GM12878 (cell line): ENCODE measurements at regions of chr17 and their contacts with region 1.

Region 1: GRCh38 chr17:76681222-76682137 is 29.3 kb downstream of the MXRA7 start:
- DNase-seq: no peak
- ATAC-seq: peak; percentile 94
- H3K4me3 ChIP-seq: no peak overlapping the region
- H3K27ac ChIP-seq: no peak overlapping the region
- H3K4me1 ChIP-seq: no peaks in the 10 kb centered on the region
- H3K27me3 ChIP-seq: peaks cover 0 to 5% of the 10 kb centered on the region in 2 experiments; a peak in 2 of 4 replicates
- CTCF ChIP-seq: peak; percentile 81 to 86 (median 83)
- EP300 ChIP-seq: no peak
- POLR2A ChIP-seq: no peak
- RAD21 ChIP-seq: peak; percentile 82

Region 2: DNA sequence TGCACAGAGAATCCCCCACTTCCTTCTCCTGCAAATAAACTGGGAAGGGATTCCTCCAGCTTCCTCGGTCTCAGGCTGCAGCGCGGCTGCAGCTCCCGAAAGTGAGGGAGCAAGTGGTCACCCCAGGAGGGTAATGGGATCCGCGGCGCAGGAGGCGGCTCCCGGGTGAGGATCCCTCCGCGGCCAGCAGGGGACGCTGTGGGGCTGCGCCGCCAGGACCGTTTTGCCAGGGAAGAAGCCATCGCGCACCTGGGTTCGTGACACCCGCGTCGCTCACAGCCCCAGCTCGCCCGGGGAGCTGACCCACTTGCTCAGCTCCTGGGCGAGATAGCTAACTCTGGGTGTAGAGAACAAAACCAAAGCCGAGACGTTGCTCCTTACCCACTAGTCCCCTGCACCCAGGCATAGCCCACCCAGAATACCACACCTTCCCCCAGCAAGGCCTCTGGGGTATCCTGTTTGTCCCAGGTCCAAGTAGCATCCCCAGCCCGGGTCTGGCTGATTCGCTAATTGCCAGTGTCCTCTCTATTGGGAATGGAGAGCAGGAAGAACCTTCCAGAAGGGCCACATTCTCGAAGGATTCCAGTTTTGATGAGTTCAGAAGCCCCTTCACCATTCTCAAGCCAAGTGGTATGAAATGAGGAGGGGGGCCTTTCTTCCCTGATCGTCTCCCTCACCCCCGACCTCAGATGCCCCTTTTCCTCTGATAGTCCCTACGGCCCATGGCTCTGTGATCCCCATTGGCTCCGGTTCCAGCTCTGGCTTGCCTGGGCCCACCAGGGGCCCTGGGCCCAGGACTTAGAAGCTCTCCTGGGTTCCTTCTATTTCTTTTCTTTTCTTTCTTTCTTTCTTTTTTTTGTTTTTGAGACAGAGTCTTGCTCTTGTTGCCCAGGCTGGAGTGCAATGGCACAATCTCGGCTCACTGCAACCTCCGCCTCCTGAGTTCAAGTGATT is 158.1 kb before region 1 on chr17:
- CTCF ChIA-PET with region 1: interaction called, 18 read pairs
- POLR2A ChIA-PET with region 1: no interaction called
- RAD21 ChIA-PET with region 1: interaction called, 5 read pairs
- SMC1A ChIA-PET with region 1: interaction called, 5 read pairs
- in situ Hi-C with region 1: loop called (anchors 5 kb)
- intact Hi-C with region 1: loop called (anchors 2 kb)
- DNase-seq: no peak
- ATAC-seq: peak; percentile 75
- H3K4me3 ChIP-seq: no peak overlapping the region
- H3K27ac ChIP-seq: no peak overlapping the region
- H3K4me1 ChIP-seq: peaks cover 10% of the 10 kb centered on the region
- H3K27me3 ChIP-seq: no peaks in the 10 kb centered on the region
- CTCF ChIP-seq: peak; percentile 99 to 100 (median 99); a peak in 5 of 6 replicates
- EP300 ChIP-seq: no peak
- POLR2A ChIP-seq: no peak
- RAD21 ChIP-seq: peak; percentile 89

Region 3: GRCh38 chr17:76671123-76671911 is 10.2 kb before region 1 on chr17:
- CTCF ChIA-PET with region 1: interaction called, 27 read pairs
- POLR2A ChIA-PET with region 1: no interaction called
- RAD21 ChIA-PET with region 1: interaction called, 11 read pairs
- SMC1A ChIA-PET with region 1: interaction called, 12 read pairs
- in situ Hi-C with region 1: no loop called
- intact Hi-C with region 1: no loop called
- DNase-seq: peak; percentile 99
- ATAC-seq: peak; percentile 100
- H3K4me3 ChIP-seq: peak overlapping the region; percentile 80; the same call in 1 of the 2 replicates
- H3K27ac ChIP-seq: peak overlapping the region; percentile 71
- H3K4me1 ChIP-seq: peaks cover 5% of the 10 kb centered on the region
- H3K27me3 ChIP-seq: no peaks in the 10 kb centered on the region; a peak in 1 of 4 replicates
- CTCF ChIP-seq: no peak
- EP300 ChIP-seq: no peak
- POLR2A ChIP-seq: peak; percentile 79
- RAD21 ChIP-seq: no peak

Region 4: GRCh38 chr17:76696763-76697701 is 15.6 kb after region 1 on chr17:
- CTCF ChIA-PET with region 1: interaction called, 21 read pairs
- POLR2A ChIA-PET with region 1: no interaction called
- RAD21 ChIA-PET with region 1: no interaction called
- SMC1A ChIA-PET with region 1: interaction called, 9 read pairs
- in situ Hi-C with region 1: no loop called
- intact Hi-C with region 1: no loop called
- DNase-seq: peak; percentile 40
- ATAC-seq: peak; percentile 92
- H3K4me3 ChIP-seq: no peak overlapping the region
- H3K27ac ChIP-seq: no peak overlapping the region
- H3K4me1 ChIP-seq: peaks cover 22% of the 10 kb centered on the region
- H3K27me3 ChIP-seq: no peaks in the 10 kb centered on the region; a peak in 1 of 4 replicates
- CTCF ChIP-seq: no peak
- EP300 ChIP-seq: no peak
- POLR2A ChIP-seq: no peak
- RAD21 ChIP-seq: no peak

Region 5: GRCh38 chr17:76714822-76715495 is 33.5 kb after region 1 on chr17:
- CTCF ChIA-PET with region 1: interaction called, 18 read pairs
- POLR2A ChIA-PET with region 1: no interaction called
- RAD21 ChIA-PET with region 1: interaction called, 10 read pairs
- SMC1A ChIA-PET with region 1: no interaction called
- in situ Hi-C with region 1: no loop called
- intact Hi-C with region 1: no loop called
- DNase-seq: no peak
- ATAC-seq: peak; percentile 71
- H3K4me3 ChIP-seq: no peak overlapping the region
- H3K27ac ChIP-seq: no peak overlapping the region
- H3K4me1 ChIP-seq: peaks cover 8% of the 10 kb centered on the region
- H3K27me3 ChIP-seq: no peaks in the 10 kb centered on the region; a peak in 1 of 4 replicates
- CTCF ChIP-seq: peak; percentile 68 to 77 (median 69)
- EP300 ChIP-seq: no peak
- POLR2A ChIP-seq: no peak
- RAD21 ChIP-seq: peak; percentile 71

Region 6: DNA sequence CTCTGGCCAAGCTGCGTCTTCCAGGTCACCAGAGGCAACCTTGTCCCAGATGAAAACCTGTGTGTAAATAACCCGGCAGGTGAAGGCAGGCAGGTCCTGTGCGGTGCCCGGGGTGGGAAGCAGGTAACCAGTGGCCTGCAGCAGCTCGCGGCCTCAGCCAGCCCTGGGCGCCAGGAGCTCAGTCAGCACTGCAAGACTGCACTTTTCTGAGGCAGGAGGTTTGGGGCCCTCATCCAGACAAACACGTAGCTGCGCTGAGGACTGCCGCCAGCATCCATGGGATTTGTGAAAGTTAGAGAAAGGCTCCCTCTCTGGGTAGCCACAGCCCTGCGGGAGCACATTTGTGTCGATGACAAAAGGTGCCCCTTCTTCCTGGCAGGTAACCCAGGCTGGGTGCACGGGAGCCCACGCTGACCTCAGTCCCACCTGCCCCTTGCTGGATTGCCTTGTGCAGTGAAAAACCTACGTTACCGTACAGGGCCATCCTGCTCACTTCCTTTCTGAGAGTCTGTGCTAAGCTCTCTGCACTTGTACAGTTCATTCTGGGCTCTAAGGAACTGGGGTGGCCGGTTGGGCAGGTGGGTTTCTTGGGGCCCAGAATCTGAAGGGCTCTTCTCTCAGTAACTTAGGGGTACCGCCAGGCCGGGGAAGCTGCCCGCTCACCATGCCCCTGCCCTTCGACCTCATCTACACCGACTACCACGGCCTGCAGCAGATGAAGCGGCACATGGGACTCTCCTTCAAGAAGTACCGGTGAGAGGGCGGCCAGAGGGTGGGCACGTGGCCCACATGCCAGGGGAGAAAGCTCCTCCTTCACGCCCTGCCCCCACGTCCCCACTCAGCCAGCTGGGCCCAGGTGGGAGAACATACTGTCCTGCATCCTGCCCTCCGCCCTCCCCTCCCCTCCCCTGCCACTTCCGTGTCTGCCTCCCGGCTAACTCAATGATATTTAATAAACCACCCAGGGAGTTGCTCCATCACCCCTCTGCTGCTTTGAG is 243.2 kb after region 1 on chr17:
- CTCF ChIA-PET with region 1: no interaction called
- POLR2A ChIA-PET with region 1: no interaction called
- RAD21 ChIA-PET with region 1: no interaction called
- SMC1A ChIA-PET with region 1: no interaction called
- in situ Hi-C with region 1: no loop called
- intact Hi-C with region 1: no loop called
- DNase-seq: no peak
- ATAC-seq: no peak
- H3K4me3 ChIP-seq: no peak overlapping the region
- H3K27ac ChIP-seq: no peak overlapping the region
- H3K4me1 ChIP-seq: no peaks in the 10 kb centered on the region
- H3K27me3 ChIP-seq: peaks cover 3 to 4% of the 10 kb centered on the region in 2 experiments; a peak in 1 of 4 replicates
- CTCF ChIP-seq: no peak
- EP300 ChIP-seq: no peak
- POLR2A ChIP-seq: no peak
- RAD21 ChIP-seq: no peak